Activated CD4-positive, alpha-beta T cell treated with anti-CD3 and anti-CD28 coated beads for 36 hours (primary cell): ENCODE measurements at regions of chr4 and their contacts with region 1.

Region 1: DNA sequence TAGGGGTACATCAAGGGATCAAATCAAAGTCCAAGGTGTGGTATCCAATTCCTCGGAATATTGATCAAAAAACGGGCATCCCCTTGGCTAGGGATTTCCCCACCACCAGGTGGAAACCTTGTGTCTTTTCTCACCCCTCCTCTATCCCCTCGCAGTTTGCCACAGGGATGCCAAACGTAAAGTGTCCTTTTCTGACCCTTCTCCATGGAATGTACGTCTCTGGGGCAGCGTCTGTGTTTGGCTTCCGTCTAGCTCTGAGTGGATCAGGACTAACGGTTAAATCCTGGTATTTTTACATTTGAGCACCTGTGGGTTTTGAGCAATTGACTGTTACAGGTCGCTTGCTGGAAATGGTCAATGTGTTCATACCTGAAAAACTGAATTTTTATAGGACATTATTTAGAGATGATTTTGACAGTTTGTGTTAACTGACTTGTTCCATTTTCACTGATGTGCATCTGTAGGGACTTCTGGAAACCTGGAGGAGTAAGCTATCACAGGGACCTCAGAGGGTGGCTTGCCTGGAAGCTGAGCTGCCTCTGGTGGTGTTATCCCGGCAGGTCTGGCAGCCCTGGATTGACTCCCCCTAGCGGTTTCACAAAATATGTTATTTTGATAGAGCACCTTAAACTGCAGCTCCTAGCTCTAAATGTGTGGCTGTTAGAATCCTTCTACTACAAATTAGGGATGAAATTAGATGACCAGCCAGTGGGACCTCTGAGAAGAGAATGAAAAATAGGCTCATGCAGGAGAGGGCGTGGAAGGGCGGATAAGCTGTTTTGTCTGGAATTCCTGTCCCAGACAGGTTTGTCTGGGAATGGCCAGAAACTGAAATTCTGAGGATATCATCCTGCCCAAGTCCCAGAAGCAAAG is 8.8 kb upstream of the MGST2 start:
- DNase-seq: peak; percentile 73
- ATAC-seq: peak; percentile 48
- H3K4me3 Mint-ChIP-seq: peak overlapping the region; percentile 57
- H3K27ac Mint-ChIP-seq: peak overlapping the region; percentile 99
- H3K4me1 Mint-ChIP-seq: peaks cover 24% of the 10 kb centered on the region
- H3K27me3 Mint-ChIP-seq: no peaks in the 10 kb centered on the region

Region 2: GRCh38 chr4:139453371-139454110 is 203.3 kb before region 1 on chr4:
- CTCF ChIA-PET with region 1: no interaction called
- POLR2A ChIA-PET with region 1: interaction called, 3 read pairs
- intact Hi-C with region 1: loop called in 1 of 2 experiments (anchors 2 kb)
- DNase-seq: peak; percentile 99
- ATAC-seq: peak; percentile 90
- H3K4me3 Mint-ChIP-seq: peak overlapping the region; percentile 91
- H3K27ac Mint-ChIP-seq: peak overlapping the region; percentile 98
- H3K4me1 Mint-ChIP-seq: peaks cover 48% of the 10 kb centered on the region
- H3K27me3 Mint-ChIP-seq: no peaks in the 10 kb centered on the region

Region 3: DNA sequence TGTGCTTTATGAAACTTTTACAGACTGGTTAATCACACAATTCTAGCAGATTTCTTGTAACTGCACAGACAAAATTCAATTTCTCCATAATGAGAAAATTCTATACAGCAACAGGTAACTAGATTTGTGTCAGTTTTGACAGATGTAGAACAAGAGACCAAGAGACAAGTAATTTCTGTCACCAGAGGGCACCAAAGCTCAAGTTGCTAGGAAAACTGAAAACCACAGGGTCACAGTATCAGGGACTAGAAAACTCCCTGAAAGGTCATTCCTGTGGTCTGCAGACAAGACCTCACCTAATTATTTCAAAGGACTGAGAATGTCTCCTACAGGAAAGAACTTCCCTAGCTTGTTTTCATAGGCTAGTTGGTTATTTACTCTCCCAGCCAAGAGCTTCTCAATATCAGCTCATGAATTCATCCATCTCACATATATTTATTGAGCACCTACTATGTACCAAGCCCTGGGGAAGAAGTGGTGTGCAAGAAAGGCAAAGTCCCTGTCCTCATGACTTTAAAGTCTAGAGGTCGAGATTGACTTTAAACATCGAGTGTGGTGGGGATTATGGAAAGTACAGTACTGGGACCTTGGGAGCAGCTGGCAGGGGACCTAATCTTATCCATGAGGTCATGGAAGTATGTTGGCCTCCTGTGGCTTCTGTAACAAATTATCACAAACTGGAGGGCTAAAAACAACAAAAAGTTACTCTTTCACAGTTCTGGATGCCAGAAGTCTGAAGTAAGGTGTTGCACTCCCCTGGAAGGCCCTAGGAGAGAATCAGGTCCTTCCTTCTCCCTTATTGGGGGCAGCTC is 53.1 kb before region 1 on chr4:
- CTCF ChIA-PET with region 1: interaction called, 82 read pairs
- POLR2A ChIA-PET with region 1: no interaction called
- intact Hi-C with region 1: no loop called
- DNase-seq: peak; percentile 45
- ATAC-seq: peak; percentile 62
- H3K4me3 Mint-ChIP-seq: no peak overlapping the region
- H3K27ac Mint-ChIP-seq: no peak overlapping the region
- H3K4me1 Mint-ChIP-seq: peaks cover 10% of the 10 kb centered on the region
- H3K27me3 Mint-ChIP-seq: peaks cover 5% of the 10 kb centered on the region

Region 4: DNA sequence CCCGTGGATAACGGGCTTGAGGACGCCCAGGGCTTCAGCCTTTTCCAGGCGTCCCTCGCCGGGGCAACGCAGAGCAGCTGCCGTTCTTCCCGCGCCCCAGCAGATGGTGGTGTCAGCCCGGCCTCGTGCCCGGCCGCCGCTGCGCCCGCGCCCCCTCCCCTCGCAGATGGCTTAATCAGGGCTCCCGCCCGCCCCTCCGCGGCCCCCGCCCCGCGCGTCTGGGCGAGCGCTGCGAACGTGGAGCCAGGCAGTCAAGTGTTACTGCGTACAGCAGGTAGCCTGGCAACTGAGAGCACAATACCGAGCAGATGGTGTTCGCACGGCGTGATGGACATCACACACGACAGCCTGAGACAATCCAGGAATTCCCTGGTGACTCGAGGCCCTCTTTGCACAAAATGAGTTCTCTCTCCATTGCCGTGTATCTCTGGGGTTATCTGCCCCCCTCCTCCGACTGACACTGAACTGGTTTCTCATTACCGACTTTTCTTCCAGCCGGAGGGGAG is 78.1 kb after region 1 on chr4:
- CTCF ChIA-PET with region 1: interaction called, 3 read pairs
- POLR2A ChIA-PET with region 1: no interaction called
- intact Hi-C with region 1: loop called in 1 of 2 experiments (anchors 2 kb)
- DNase-seq: peak; percentile 86
- ATAC-seq: peak; percentile 83
- H3K4me3 Mint-ChIP-seq: peak overlapping the region; percentile 65
- H3K27ac Mint-ChIP-seq: no peak overlapping the region
- H3K4me1 Mint-ChIP-seq: peaks cover 13% of the 10 kb centered on the region
- H3K27me3 Mint-ChIP-seq: peaks cover 33% of the 10 kb centered on the region

Region 5: DNA sequence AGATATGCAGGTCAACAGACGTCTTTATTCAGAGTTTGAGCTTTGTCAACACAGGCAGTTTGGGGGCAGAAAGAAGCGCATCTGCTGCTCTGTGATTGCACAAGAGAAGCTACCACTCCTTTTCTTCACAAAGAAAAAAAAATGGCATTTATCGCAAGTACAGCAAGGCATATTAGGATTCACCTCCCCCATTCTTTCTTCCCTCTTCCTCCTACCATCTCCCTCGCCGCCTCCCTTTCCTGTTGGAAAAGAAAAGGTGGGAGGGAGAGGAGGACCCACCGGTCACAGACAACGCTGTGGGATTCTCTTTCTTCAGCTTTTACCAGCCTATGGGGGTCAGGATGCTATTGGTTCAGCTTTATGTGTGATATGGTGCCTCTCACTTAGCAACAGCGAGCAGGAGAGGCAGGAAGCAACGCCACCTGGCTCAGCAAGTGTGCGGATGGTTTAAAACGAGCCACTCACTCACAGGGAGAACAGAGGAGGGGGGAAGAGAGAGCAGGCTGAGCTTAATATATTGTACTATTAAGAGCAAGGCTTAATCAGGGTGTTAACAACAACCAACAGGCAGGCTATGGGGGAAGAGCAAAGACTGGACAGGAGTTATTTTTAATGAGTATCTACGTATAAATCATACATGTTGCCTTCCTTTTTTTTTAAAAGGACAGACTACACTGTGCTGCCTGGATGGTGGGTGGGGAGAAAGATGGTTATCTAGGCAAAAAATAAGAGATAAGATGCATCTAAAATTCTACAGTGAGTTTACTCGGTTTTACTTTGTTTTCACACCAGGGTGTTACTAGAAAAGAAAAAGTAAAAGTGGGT is 392.4 kb after region 1 on chr4:
- CTCF ChIA-PET with region 1: interaction called, 3 read pairs
- POLR2A ChIA-PET with region 1: no interaction called
- intact Hi-C with region 1: loop called (anchors 2 to 5 kb)
- DNase-seq: peak; percentile 71
- ATAC-seq: peak; percentile 91
- H3K4me3 Mint-ChIP-seq: peak overlapping the region; percentile 73
- H3K27ac Mint-ChIP-seq: peak overlapping the region; percentile 87
- H3K4me1 Mint-ChIP-seq: peaks cover 45% of the 10 kb centered on the region
- H3K27me3 Mint-ChIP-seq: peaks cover 8% of the 10 kb centered on the region

Region 6: GRCh38 chr4:140252742-140253555 is 596.1 kb after region 1 on chr4:
- CTCF ChIA-PET with region 1: interaction called, 3 read pairs
- POLR2A ChIA-PET with region 1: no interaction called
- intact Hi-C with region 1: loop called (anchors 1 to 10 kb)
- DNase-seq: peak; percentile 75
- ATAC-seq: peak; percentile 57
- H3K4me3 Mint-ChIP-seq: peak overlapping the region; percentile 59
- H3K27ac Mint-ChIP-seq: peak overlapping the region; percentile 71
- H3K4me1 Mint-ChIP-seq: peaks cover 39% of the 10 kb centered on the region
- H3K27me3 Mint-ChIP-seq: peaks cover 15% of the 10 kb centered on the region